CD4-positive, alpha-beta memory T cell (primary cell): ENCODE measurements at regions of chr1 and their contacts with region 1.

Region 1: DNA sequence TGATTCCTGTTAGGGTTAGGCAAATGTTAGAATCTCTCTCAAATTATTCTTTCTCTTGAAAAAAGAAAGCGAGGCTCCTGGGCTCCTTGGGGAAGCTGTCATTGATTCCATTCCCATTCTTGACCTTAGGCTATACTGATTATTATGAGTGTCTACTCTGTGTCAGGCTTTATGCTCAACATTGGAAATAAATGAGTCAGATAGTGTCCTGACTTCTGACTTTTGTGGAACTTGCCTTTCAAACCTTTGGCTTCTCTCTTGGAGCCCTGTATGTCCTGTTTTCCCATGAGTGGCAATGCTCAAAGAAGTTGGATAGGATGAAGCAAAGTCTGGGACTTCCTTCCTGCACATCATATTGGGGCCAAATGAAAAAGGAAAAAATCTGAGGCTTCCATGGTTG is 11.6 kb downstream of the AGO1 start:
- DNase-seq: no peak
- H3K4me3 ChIP-seq: no peak overlapping the region
- H3K4me3 Mint-ChIP-seq: no peak overlapping the region
- H3K27ac ChIP-seq: no peak overlapping the region
- H3K27ac Mint-ChIP-seq: peak overlapping the region in 2 of 7 donors; percentile 41 to 61
- H3K4me1 ChIP-seq: no peaks in the 10 kb centered on the region
- H3K4me1 Mint-ChIP-seq: peaks cover 0 to 2% (median 0%) of the 10 kb centered on the region in 4 donors
- H3K27me3 ChIP-seq: no peaks in the 10 kb centered on the region
- H3K27me3 Mint-ChIP-seq: no peaks in the 10 kb centered on the region

Region 2: GRCh38 chr1:35882945-35883634 is 11.6 kb before region 1 on chr1 and contains the start of gene AGO1:
- CTCF ChIA-PET with region 1: interaction called, 13 read pairs
- POLR2A ChIA-PET with region 1: interaction called, 3 read pairs
- intact Hi-C with region 1: no loop called
- DNase-seq: peak; percentile 94 to 97 (median 97)
- H3K4me3 ChIP-seq: peak within 1 kb of the TSS; percentile 73 to 89
- H3K4me3 Mint-ChIP-seq: peak within 1 kb of the TSS; percentile 92 to 97 (median 94)
- H3K27ac ChIP-seq: peak within 1 kb of the TSS; percentile 77
- H3K27ac Mint-ChIP-seq: peak within 1 kb of the TSS; percentile 57 to 94 (median 87)
- H3K4me1 ChIP-seq: peaks cover 40% of the 10 kb centered on the region
- H3K4me1 Mint-ChIP-seq: peaks cover 37 to 58% (median 46%) of the 10 kb centered on the region in 4 donors
- H3K27me3 ChIP-seq: no peaks in the 10 kb centered on the region
- H3K27me3 Mint-ChIP-seq: peaks cover 1 to 3% of the 10 kb centered on the region in 2 donors
- total RNA-seq, gene AGO1: 26.5 to 27.3 TPM